Cardiac septum (tissue), 1 donor: ENCODE measurements at regions of chr7 and their contacts with region 1.

Region 1: GRCh38 chr7:104983578-104984539 is 30.1 kb upstream of the KMT2E start:
- DNase-seq: peak; percentile 97

Region 2: GRCh38 chr7:104923010-104923421 is 60.8 kb before region 1 on chr7:
- intact Hi-C with region 1: loop called (anchors 2 kb)
- DNase-seq: no peak

Region 3: GRCh38 chr7:104943502-104944343 is 40.1 kb before region 1 on chr7:
- intact Hi-C with region 1: loop called (anchors 2 kb)
- DNase-seq: peak; percentile 79

Region 4: DNA sequence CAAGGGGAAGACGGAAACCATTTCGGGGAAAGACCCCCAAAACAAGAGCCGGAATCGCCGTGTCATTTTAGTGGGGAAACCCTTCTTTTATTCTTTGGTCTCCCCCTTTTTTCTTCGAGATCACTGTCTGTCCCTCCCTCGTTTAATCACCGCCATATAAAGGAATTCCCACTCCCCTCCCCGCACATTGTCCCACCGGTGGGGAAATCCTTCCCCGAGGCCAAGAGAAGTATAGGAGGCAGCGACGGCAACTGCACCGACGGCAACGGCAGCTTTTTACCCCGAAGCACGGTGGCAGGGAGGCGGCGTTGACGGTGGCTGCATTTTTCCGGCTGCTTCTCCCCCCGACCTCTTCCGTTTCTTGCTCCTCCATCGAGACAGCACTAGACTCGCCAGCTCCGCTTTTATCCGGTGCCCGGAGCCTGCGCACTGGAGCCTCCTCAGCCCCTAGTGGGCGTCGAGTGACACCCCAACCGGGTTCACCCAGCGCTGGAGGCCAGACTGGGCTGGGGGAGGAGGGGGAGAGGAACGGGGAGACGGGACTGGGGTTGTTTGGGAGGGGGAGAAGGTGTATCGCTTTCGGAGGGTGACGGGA is 29.5 kb after region 1 on chr7:
- intact Hi-C with region 1: loop called (anchors 1 kb)
- DNase-seq: peak; percentile 96

Region 5: DNA sequence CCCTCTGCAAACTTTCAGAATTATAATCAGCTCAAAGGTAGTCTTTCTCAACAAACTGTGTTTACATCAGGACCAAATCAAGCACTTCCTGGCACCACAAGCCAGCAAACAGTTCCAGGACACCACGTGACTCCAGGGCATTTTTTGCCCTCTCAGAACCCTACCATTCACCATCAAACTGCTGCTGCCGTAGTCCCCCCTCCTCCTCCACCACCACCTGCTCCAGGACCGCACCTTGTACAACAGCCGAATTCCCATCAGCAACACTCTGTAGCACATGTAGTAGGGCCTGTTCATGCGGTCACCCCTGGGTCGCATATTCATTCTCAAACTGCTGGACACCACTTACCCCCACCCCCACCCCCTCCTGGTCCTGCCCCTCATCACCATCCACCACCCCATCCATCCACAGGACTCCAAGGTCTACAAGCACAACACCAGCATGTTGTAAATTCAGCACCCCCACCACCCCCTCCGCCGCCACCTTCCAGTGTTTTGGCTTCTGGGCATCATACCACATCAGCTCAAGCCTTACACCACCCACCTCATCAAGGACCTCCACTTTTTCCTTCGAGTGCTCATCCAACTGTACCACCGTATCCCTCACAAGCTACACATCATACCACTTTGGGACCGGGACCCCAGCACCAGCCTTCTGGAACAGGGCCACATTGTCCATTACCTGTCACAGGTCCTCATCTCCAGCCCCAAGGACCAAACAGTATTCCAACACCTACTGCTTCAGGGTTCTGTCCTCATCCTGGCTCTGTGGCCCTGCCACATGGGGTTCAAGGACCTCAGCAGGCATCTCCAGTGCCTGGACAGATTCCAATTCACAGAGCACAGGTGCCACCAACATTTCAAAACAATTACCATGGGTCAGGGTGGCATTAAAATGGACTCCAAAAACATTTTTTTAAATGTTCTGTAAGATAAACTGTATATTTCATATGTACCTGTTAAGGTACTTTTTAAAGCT is 128.9 kb after region 1 on chr7:
- intact Hi-C with region 1: loop called (anchors 5 kb)
- DNase-seq: no peak